Right cardiac atrium (tissue), 5 donors: ENCODE measurements at regions of chr2 and their contacts with region 1.

Region 1: DNA sequence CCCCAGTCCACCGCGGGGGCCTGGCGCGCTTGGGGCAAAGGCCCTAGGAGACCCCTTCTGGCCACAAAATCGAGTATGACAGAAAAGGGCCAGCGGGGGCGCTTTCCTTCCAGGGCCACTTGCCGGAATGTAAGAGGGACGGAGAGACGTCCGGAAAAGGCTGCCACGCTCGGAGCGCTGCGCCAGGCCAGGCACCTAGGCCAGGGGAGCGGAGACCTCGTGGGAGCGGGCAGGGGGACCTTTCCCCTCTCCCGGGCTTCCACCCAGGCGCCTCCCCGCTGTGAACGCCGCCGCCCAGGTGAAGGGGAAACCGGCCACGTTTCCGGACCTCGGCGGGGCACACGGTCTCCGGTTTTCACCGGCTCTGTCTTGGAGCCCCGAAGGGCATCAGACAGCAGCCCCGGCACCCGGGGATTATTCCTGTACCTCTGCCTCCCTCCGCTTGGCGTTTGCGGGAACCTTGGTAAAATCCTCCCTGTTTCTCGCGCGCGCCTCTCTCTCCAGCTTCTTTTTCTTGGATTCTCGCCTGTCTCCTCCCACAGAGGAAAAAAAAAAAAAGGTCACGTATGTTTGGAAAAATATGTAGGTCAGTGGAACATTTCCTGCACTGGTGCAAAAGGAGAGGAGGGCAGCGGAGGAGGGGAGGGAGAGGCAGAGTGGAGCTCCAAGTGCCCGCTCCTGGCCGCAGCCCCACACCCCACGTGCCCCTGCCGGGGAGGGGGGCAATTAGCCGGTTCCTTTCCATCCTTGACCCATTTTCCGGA is 1.2 kb upstream of the NPAS2 start:
- DNase-seq: peak; percentile 73 to 82 (median 81)
- ATAC-seq: peak; percentile 79 to 87
- H3K4me3 ChIP-seq: peak overlapping the region; percentile 97
- H3K27ac ChIP-seq: peak overlapping the region; percentile 85
- H3K4me1 ChIP-seq: peaks cover 7% of the 10 kb centered on the region
- H3K27me3 ChIP-seq: no peaks in the 10 kb centered on the region

Region 2: DNA sequence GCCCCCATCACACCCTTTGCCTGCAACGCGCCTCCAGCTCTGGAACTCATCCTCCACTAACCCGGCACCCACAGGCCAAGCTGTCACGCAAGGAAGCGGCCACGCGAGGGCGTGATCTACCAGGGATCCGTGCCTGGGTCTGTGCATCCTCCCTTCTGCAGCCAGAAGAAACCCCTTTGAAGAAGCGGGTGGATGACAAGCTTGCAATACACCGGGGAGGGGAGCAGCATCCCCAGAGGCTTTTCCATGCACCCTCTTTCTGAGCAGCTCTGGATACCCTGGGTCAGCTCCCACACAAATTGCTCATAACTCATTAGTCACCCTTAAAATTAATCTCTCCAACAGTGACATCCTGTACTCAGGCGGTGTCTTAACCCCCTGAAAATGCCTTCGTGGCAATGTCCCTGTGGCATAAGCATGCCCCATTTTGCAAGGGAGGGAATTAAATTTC is 208.4 kb before region 1 on chr2:
- intact Hi-C with region 1: loop called in 1 of 4 experiments (anchors 10 kb)
- DNase-seq: peak; percentile 65 to 87 (median 86)
- ATAC-seq: peak; percentile 64 to 78
- H3K4me3 ChIP-seq: no peak overlapping the region
- H3K27ac ChIP-seq: no peak overlapping the region
- H3K4me1 ChIP-seq: no peaks in the 10 kb centered on the region
- H3K27me3 ChIP-seq: no peaks in the 10 kb centered on the region

Region 3: GRCh38 chr2:100730346-100730745 is 88.4 kb before region 1 on chr2:
- intact Hi-C with region 1: loop called in 2 of 4 experiments (anchors 5 kb)
- DNase-seq: peak; percentile 66 to 82 (median 79)
- ATAC-seq: peak; percentile 85 to 89
- H3K4me3 ChIP-seq: no peak overlapping the region
- H3K27ac ChIP-seq: no peak overlapping the region
- H3K4me1 ChIP-seq: peaks cover 2% of the 10 kb centered on the region
- H3K27me3 ChIP-seq: no peaks in the 10 kb centered on the region

Region 4: GRCh38 chr2:100747551-100747950 is 71.2 kb before region 1 on chr2:
- intact Hi-C with region 1: loop called in 1 of 4 experiments (anchors 5 kb)
- DNase-seq: no peak
- ATAC-seq: no peak
- H3K4me3 ChIP-seq: no peak overlapping the region
- H3K27ac ChIP-seq: no peak overlapping the region
- H3K4me1 ChIP-seq: peaks cover 4% of the 10 kb centered on the region
- H3K27me3 ChIP-seq: no peaks in the 10 kb centered on the region

Region 5: GRCh38 chr2:100984892-100985379 is 166.1 kb after region 1 on chr2:
- intact Hi-C with region 1: loop called in 2 of 4 experiments (anchors 5 to 10 kb)
- DNase-seq: peak; percentile 81 to 91 (median 91)
- ATAC-seq: peak; percentile 67 to 70
- H3K4me3 ChIP-seq: no peak overlapping the region
- H3K27ac ChIP-seq: no peak overlapping the region
- H3K4me1 ChIP-seq: peaks cover 4% of the 10 kb centered on the region
- H3K27me3 ChIP-seq: no peaks in the 10 kb centered on the region